HCT116 (cell line): ENCODE measurements at regions of chr14 and their contacts with region 1.

Region 1: GRCh38 chr14:93206793-93207467 is at the starts of genes GON7 and UBR7:
- DNase-seq: peak; percentile 93
- ATAC-seq: peak; percentile 92
- H3K4me3 ChIP-seq: peak within 1 kb of the TSS; percentile 74 to 97
- H3K27ac ChIP-seq: peak within 1 kb of the TSS; percentile 83
- H3K4me1 ChIP-seq: peaks cover 7 to 30% of the 10 kb centered on the region in 2 experiments
- H3K27me3 ChIP-seq: no peaks in the 10 kb centered on the region
- CTCF ChIP-seq: 0 out of 6 replicates have a peak, but pooled peaks of 1 of the 3 experiments have one; percentile 22
- POLR2A ChIP-seq: peak; percentile 51
- RAD21 ChIP-seq: no peak
- total RNA-seq, gene GON7: 11.2 TPM
- total RNA-seq, gene UBR7: 23.9 TPM

Region 2: DNA sequence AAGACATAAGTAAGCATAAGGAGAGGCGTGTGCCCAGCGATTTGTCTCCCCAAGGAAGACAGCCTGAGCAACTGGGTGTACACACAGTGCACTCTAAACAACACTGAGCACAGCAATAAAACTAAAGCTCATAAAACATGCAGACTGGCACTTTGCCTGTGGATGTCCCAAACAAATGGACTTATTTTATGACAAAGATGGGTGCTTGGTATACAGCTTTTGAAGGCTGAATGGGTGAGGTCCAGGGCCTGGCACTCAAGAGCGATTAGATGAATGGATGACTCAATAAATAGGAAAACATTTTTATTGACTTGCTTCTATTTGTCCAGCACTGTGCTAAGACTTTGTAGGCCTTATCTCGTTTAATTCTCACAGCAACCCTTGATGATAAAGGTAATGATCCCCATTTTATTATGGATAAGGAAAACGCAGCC is 487.0 kb before region 1 on chr14:
- CTCF ChIA-PET with region 1: no interaction called
- POLR2A ChIA-PET with region 1: no interaction called
- RAD21 ChIA-PET with region 1: no interaction called
- intact Hi-C with region 1: no loop called
- DNase-seq: no peak
- ATAC-seq: peak; percentile 60; the same call in 1 of the 2 replicates
- H3K4me3 ChIP-seq: no peak overlapping the region
- H3K27ac ChIP-seq: 0 out of 2 replicates have a peak overlapping the region, but pooled peaks have one; percentile 22
- H3K4me1 ChIP-seq: peaks cover 0 to 7% of the 10 kb centered on the region in 2 experiments; a peak in 2 of 4 replicates
- H3K27me3 ChIP-seq: no peaks in the 10 kb centered on the region
- CTCF ChIP-seq: no peak
- POLR2A ChIP-seq: no peak
- RAD21 ChIP-seq: no peak

Region 3: DNA sequence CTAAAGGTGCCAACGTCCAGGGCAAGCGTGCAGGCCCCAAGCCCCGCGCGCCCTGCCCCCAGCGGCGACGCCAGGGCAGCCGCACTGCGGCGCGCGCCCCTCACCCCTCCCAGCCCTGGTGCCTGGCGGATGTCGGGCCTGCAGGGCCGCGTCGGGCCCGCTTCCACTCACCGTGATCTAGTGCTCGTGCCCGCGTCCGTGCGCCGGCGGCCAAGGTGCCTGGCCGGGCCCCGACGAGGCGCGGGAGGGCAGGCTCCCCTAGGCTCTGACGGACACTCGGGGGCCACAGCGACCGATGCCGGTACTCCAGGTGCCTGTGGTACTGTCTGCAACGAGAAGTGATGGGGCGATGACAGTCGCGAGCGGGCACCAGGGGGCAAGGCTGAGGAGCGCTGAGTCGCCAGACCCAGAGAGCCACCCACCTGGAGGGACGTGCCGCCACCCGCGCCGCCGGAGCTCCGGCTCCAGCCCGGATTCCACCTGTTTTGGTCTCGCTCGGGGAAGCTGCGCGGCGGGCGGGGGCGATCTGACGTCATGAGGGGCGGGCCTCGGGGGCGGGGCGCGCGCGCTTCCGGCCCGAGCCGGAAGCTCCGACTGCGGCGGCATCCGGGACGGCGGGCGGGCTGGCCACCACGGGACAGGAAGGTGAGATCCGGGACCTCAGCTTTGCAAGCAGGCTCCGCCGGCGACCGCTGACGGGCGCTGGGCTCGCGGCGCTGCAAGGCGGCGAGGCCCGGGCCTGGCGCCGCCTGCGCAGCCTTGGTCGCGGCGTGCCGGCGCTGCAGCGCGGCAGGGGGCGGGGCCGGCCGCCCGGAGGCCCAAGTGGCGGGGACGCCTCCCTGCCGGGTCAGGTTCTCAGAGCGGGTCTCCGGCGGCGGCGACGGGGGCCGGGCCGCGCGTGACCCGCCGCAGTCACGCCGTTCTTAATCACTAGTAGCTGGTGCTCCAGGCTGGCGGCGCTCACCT is 22.3 kb before region 1 on chr14 and contains the starts of genes LYSET and MOAP1:
- CTCF ChIA-PET with region 1: interaction called, 10 read pairs
- POLR2A ChIA-PET with region 1: interaction called, 12 read pairs
- RAD21 ChIA-PET with region 1: no interaction called
- intact Hi-C with region 1: no loop called
- DNase-seq: no peak
- ATAC-seq: peak; percentile 86
- H3K4me3 ChIP-seq: peak within 1 kb of the TSS; percentile 71 to 94
- H3K27ac ChIP-seq: peak within 1 kb of the TSS; percentile 94
- H3K4me1 ChIP-seq: peaks cover 2 to 16% of the 10 kb centered on the region in 2 experiments; a peak in 3 of 4 replicates
- H3K27me3 ChIP-seq: no peaks in the 10 kb centered on the region
- CTCF ChIP-seq: peak in 2 of 3 experiments; percentile 6 to 31; a peak in 2 of 6 replicates
- POLR2A ChIP-seq: peak; percentile 15
- RAD21 ChIP-seq: no peak
- total RNA-seq, gene LYSET: 19.5 TPM
- total RNA-seq, gene MOAP1: 14.2 TPM

Region 4: DNA sequence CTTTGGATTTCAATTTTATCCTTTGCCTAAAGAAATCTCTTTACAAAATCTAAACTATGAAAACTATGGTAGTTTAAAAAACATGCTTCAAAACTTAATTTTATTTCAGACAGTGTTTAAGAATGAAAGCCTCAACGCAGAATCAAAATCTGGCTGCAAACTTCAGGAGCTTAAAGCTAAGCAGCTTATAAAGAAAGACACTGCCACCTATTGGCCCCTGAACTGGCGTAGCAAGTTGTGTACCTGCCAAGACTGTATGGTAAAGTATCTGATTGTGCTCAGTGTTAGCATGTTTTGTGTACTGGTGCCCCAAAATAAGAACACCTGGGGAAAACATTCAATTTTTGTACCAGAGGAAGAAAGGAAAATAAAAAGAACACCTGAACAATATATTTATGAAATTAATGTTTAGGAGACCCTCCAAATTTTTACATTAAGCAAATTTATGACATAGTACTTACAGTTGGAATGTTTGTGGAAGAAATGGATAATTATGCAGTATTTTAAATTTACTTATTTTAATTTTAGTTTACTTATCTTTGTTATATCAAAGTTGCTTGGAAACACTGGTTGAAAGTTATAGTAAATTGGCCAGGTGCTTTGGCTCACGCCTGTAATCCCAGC is 12.3 kb after region 1 on chr14:
- CTCF ChIA-PET with region 1: interaction called, 19 read pairs
- POLR2A ChIA-PET with region 1: interaction called, 4 read pairs
- RAD21 ChIA-PET with region 1: no interaction called
- intact Hi-C with region 1: no loop called
- DNase-seq: peak; percentile 51
- ATAC-seq: peak; percentile 88
- H3K4me3 ChIP-seq: no peak overlapping the region
- H3K27ac ChIP-seq: no peak overlapping the region
- H3K4me1 ChIP-seq: no peaks in the 10 kb centered on the region
- H3K27me3 ChIP-seq: no peaks in the 10 kb centered on the region
- CTCF ChIP-seq: peak; percentile 66 to 79 (median 74)
- POLR2A ChIP-seq: no peak
- RAD21 ChIP-seq: peak; percentile 77

Region 5: DNA sequence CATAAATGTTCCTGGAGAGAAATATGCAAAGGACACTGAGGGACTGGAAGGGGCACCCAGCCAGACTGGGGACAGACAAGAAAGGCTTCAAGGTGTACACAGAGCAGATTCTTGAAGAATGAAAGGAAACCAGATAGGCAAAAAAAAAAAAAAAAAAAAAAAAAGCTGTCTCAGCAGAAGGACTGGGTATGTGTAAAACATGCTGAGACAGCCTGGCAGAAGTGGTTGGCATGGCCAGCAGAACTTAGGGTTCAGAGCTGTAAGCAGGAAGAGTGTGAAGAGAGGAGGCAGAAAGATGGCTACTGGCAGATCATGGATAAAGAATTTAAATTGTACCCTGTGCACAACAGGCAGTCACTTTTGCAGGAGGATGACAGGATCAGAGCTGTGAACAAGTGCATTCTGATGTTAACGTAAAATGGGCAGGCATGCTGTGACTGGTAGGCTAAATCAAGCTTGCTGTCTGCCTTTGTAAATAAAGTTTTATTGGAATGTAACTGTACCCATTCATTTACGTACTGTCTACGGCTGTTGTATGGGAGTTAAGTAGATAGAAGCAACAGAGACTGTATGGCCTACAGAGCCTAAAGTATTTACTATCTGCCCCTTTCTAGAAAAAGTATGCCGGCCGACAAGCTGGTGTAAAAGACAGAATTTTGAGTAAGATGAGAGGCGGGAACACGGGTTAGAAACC is 42.3 kb after region 1 on chr14:
- CTCF ChIA-PET with region 1: no interaction called
- POLR2A ChIA-PET with region 1: no interaction called
- RAD21 ChIA-PET with region 1: no interaction called
- intact Hi-C with region 1: no loop called
- DNase-seq: no peak
- ATAC-seq: no peak
- H3K4me3 ChIP-seq: no peak overlapping the region
- H3K27ac ChIP-seq: no peak overlapping the region
- H3K4me1 ChIP-seq: no peaks in the 10 kb centered on the region
- H3K27me3 ChIP-seq: no peaks in the 10 kb centered on the region
- CTCF ChIP-seq: no peak
- POLR2A ChIP-seq: no peak
- RAD21 ChIP-seq: no peak

Region 6: DNA sequence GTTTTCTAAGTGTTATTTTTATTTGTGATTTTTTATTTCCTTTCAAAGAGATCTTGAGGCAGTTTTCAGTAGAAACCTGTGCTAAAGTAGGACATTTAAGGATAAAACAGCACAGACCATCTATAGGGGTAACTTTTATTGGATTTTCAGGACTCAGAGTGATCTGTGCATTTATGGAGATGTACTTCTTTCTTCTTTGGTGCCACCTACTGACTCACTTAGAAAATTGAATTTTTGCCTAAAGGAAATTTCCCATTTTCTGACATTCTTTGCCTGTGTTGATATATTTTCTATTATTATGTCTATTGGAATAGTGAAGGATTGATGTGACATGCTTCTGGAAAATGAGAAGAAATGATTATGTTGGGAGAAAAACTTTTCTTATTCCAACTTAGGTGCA is 336.8 kb after region 1 on chr14:
- CTCF ChIA-PET with region 1: no interaction called
- POLR2A ChIA-PET with region 1: no interaction called
- RAD21 ChIA-PET with region 1: interaction called in 1 of 2 experiments, 3 read pairs
- intact Hi-C with region 1: loop called (anchors 1 kb)
- DNase-seq: peak; percentile 19
- ATAC-seq: peak; percentile 69
- H3K4me3 ChIP-seq: no peak overlapping the region
- H3K27ac ChIP-seq: no peak overlapping the region
- H3K4me1 ChIP-seq: no peaks in the 10 kb centered on the region
- H3K27me3 ChIP-seq: peaks cover 31% of the 10 kb centered on the region
- CTCF ChIP-seq: peak; percentile 37 to 47 (median 40); a peak in 4 of 6 replicates
- POLR2A ChIP-seq: no peak
- RAD21 ChIP-seq: peak; percentile 62

Region 7: GRCh38 chr14:93838238-93838637 is 631.3 kb after region 1 on chr14:
- CTCF ChIA-PET with region 1: no interaction called
- POLR2A ChIA-PET with region 1: no interaction called
- RAD21 ChIA-PET with region 1: no interaction called
- intact Hi-C with region 1: no loop called
- DNase-seq: no peak
- ATAC-seq: no peak
- H3K4me3 ChIP-seq: no peak overlapping the region
- H3K27ac ChIP-seq: no peak overlapping the region
- H3K4me1 ChIP-seq: peaks cover 0 to 7% of the 10 kb centered on the region in 2 experiments; a peak in 2 of 4 replicates
- H3K27me3 ChIP-seq: peaks cover 6% of the 10 kb centered on the region; the same call in 1 of the 2 replicates
- CTCF ChIP-seq: no peak
- POLR2A ChIP-seq: no peak
- RAD21 ChIP-seq: no peak